ENCODE measurements at regions of chr3 and their contacts with region 1.

Region 1: GRCh38 chr3:17985658-17986347 is 243.4 kb upstream of the TBC1D5 start:
- DNase-seq: no peak
- H3K4me3 ChIP-seq: no peak overlapping the region
- CTCF ChIP-seq: no peak

Region 2: DNA sequence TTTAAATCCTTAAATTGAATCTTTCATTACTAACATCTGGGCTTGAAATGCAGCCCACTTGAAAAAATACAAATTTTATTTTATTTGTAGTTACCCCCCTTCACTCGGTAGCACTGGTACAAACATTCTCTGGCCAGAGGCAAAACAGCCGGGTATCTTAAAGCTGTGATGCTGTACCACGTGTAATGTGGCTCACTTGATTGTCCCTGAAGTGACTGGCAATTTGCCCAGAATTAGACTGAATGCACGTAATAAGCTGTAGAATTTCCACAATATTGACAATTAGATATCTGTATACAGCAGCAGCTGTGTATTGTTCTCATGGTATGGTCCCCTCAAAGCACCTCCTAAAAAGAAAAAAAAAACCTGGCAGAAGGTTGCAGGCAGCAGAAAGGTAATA is 50.6 kb before region 1 on chr3:
- in situ Hi-C with region 1: loop called (anchors 5 kb)
- DNase-seq: no peak
- H3K4me3 ChIP-seq: no peak overlapping the region
- CTCF ChIP-seq: no peak

Region 3: GRCh38 chr3:17949101-17949500 is 36.7 kb before region 1 on chr3:
- in situ Hi-C with region 1: no loop called
- DNase-seq: no peak
- H3K4me3 ChIP-seq: no peak overlapping the region
- CTCF ChIP-seq: no peak

Region 4: GRCh38 chr3:18027161-18027939 is 41.5 kb after region 1 on chr3:
- in situ Hi-C with region 1: no loop called
- DNase-seq: peak; percentile 72
- H3K4me3 ChIP-seq: no peak overlapping the region
- CTCF ChIP-seq: no peak